Mammary epithelial cell (primary cell): ENCODE measurements at regions of chr1 and their contacts with region 1.

Region 1: DNA sequence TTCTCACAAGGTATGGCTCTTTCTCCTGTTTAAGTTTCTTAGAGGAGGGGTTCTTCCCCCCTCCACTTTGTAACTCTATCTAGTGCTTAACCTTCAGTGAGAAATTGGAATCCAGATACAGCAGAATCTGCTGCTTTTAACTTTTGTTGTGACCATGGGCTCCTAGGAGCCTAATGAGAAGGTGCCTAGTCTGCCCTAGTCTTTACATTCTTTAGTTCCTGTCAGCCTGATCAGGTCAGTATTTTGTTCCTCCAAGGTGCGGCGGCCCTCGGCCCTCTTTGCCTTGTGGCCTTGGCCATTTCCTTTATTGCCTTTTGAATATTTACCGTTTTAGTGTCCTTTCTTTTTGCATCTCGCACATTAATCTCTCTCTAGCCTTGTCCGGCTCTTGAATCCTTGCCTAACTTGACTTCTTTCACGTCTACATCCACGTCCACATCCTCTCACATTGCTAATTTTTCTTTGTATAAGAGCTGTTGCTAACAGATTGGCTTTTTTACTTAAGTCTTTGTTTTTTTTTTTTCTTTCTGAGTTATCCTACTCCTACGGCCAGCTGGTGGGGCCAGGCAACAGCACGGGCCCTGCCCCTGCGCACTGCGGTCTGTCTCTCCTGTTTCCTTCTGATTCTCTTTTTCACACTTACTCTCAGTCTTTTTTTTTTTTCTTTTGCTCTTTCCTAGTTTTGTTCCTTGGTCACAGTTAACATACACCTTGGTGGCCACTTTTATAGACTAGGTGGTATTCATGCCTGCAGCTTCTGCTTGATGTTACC is 49.0 kb downstream of the SFPQ start:
- DNase-seq: peak; percentile 9
- H3K4me3 ChIP-seq: no peak overlapping the region
- H3K27ac ChIP-seq: no peak overlapping the region
- H3K4me1 ChIP-seq: peaks cover 9% of the 10 kb centered on the region
- H3K27me3 ChIP-seq: no peaks in the 10 kb centered on the region
- CTCF ChIP-seq: no peak

Region 2: GRCh38 chr1:35097224-35097623 is 46.7 kb before region 1 on chr1:
- CTCF ChIA-PET with region 1: no interaction called
- dilution Hi-C with region 1: loop called (anchors 5 kb)
- in situ Hi-C with region 1: no loop called
- intact Hi-C with region 1: no loop called
- DNase-seq: no peak
- H3K4me3 ChIP-seq: no peak overlapping the region
- H3K27ac ChIP-seq: no peak overlapping the region
- H3K4me1 ChIP-seq: no peaks in the 10 kb centered on the region
- H3K27me3 ChIP-seq: no peaks in the 10 kb centered on the region
- CTCF ChIP-seq: no peak

Region 3: DNA sequence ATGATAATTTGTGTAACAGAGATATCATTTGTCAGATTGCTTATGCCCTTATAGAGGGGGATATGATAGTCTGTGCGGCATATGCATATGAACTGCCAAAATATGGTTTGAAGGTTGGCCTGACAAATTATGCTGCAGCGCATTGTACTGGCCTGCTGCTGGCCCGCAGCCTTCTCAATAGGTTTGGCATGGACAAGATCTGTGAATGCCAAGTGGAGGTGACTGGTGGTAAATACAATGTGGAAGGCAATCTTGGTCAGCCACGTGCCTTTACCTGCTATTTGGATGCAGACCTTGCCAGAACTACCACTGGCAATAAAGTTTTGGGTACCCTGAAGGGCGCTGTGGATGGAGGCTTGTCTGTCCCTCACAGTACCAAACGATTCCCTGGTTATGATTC is 206.9 kb after region 1 on chr1:
- CTCF ChIA-PET with region 1: no interaction called
- dilution Hi-C with region 1: no loop called
- in situ Hi-C with region 1: no loop called
- intact Hi-C with region 1: no loop called
- DNase-seq: no peak
- H3K4me3 ChIP-seq: no peak overlapping the region
- H3K27ac ChIP-seq: no peak overlapping the region
- H3K4me1 ChIP-seq: no peaks in the 10 kb centered on the region
- H3K27me3 ChIP-seq: no peaks in the 10 kb centered on the region
- CTCF ChIP-seq: no peak

Region 4: GRCh38 chr1:35475856-35476674 is 332.1 kb after region 1 on chr1:
- CTCF ChIA-PET with region 1: no interaction called
- dilution Hi-C with region 1: no loop called
- in situ Hi-C with region 1: no loop called
- intact Hi-C with region 1: no loop called
- DNase-seq: no peak
- H3K4me3 ChIP-seq: no peak overlapping the region
- H3K27ac ChIP-seq: no peak overlapping the region
- H3K4me1 ChIP-seq: no peaks in the 10 kb centered on the region
- H3K27me3 ChIP-seq: no peaks in the 10 kb centered on the region
- CTCF ChIP-seq: no peak